Activated CD4-positive, alpha-beta T cell treated with anti-CD3 and anti-CD28 coated beads, Interleukin-2, amount 10 ng/mL, durations not matched to agents 24 days and 14 days (primary cell): ENCODE measurements at regions of chr1 and their contacts with region 1.

Region 1: DNA sequence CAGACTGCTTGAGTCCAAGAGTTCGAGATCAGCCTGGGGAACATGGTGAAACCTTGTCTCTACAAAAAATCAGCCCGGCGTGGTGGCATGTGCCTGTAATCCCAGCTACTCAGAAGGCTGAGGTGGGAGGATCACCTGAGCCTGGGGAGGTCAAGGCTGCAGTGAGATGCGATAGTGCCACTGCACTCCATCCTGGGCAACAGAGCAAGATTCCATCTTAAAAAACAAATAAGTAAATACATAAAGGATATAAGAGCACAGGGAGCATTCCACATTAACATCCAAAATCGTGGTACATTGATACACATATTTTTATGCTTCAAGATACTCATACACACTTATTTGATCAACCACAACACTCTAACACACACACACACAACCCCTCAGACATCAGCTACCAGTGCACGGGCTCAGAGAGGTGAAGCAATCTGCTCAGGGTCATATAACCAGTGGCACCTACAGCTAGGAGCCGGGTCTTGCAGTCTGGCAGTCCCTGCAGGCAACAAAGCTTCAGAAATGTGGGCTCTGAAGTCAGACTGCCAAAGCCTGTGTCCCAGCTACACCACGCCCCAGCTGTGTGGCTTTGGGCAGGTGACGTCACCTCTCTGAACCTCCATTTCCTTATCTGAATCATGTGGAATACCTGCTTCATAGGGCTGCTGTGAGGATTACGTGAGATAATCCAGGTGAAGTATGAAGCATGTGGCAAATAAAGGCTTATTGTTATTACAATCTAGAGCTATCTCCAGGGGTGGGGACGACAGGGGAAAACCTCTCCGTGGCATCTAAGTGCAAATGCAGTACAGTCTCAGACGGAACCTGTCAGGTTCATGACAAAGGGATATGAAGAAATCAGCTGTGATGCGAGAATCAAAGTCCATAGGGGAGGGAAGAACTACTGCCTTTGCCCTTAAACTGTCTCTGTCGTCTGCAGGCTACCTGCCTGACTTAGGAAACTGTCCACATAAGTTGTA is 4.8 kb upstream of the CRYBG2 start:
- DNase-seq: peak; percentile 93
- H3K4me3 Mint-ChIP-seq: peak overlapping the region; percentile 77
- H3K27ac Mint-ChIP-seq: peak overlapping the region; percentile 36
- H3K4me1 Mint-ChIP-seq: peaks cover 42% of the 10 kb centered on the region
- H3K27me3 Mint-ChIP-seq: peaks cover 14% of the 10 kb centered on the region

Region 2: GRCh38 chr1:26336477-26337205 is 22.1 kb before region 1 on chr1:
- intact Hi-C with region 1: loop called (anchors 2 kb)
- DNase-seq: peak; percentile 93
- H3K4me3 Mint-ChIP-seq: peak overlapping the region; percentile 92
- H3K27ac Mint-ChIP-seq: no peak overlapping the region
- H3K4me1 Mint-ChIP-seq: peaks cover 3% of the 10 kb centered on the region
- H3K27me3 Mint-ChIP-seq: peaks cover 8% of the 10 kb centered on the region